PC-9 (cell line): ENCODE measurements at regions of chr5 and their contacts with region 1.

Region 1: DNA sequence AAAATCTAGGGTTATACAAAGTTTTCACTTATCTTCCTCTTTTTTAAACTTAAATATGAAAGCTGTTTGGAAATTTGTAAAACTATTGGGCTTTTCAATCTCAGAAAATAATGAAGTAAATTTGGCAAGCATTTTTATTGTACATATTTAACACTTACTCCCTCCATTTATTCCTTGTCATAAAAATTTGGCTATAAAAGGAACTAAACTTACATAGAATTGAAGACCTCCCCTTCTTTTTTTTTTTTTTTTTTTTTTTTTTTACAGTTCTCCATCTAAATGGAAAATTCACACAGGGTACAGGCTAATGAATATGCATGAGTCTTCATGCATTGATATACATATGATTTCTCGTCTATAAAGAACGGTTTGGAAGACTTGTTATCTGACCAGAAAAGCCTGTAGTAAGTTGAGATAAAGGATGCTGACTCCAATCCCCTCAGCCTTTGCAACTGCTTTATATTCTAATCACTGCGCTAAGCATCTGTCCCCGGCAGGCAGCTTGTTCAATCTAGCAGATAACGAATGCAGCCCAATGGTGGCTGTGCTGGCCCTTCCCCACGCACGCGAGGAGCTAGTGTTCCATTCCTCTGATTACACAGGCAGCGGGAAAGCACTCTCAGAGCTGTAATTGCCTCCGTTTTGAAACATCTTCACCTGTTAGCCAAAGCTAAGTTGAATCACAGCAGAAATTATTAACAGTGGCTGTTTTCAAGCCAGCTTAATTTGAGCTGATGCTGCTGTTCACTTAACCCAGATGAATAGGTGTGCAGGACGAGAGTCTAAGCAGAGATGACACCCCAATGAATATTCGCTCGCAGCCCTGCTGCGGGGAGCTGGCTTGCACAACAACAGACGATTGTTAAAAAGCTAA is 453.8 kb upstream of the ZNF608 start:
- DNase-seq: no peak
- H3K4me3 ChIP-seq: no peak overlapping the region
- H3K27ac ChIP-seq: no peak overlapping the region
- H3K4me1 ChIP-seq: no peaks in the 10 kb centered on the region
- H3K27me3 ChIP-seq: no peaks in the 10 kb centered on the region
- CTCF ChIP-seq: no peak

Region 2: GRCh38 chr5:124888050-124888506 is 312.1 kb before region 1 on chr5:
- CTCF ChIA-PET with region 1: no interaction called
- POLR2A ChIA-PET with region 1: no interaction called
- intact Hi-C with region 1: loop called (anchors 5 kb)
- DNase-seq: no peak
- H3K4me3 ChIP-seq: no peak overlapping the region
- H3K27ac ChIP-seq: no peak overlapping the region
- H3K4me1 ChIP-seq: no peaks in the 10 kb centered on the region
- H3K27me3 ChIP-seq: no peaks in the 10 kb centered on the region
- CTCF ChIP-seq: no peak